HepG2 (cell line): ENCODE measurements at regions of chr13 and their contacts with region 1.

Region 1: DNA sequence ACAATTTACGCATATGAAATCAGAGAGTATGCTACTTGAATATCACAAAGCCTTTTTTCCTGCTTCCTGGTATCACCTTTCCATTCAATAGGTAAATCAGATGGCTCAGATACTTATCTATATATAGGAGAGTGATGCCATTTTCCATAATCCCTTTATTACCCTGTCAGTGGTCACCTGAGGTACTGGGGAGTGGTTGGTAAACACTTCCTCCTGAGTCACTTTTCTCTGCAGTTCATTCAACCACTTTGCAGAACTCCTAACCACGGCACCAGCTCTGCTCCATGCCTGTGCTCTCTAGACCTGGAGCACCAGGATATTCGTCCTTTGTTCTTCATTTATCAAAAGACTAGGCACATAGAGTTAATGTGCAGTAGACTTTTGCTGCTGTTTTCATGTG is 748.5 kb upstream of the KLHL1 start:
- DNase-seq: no peak
- ATAC-seq: no peak
- H3K4me3 ChIP-seq: no peak overlapping the region
- H3K27ac ChIP-seq: no peak overlapping the region
- H3K4me1 ChIP-seq: no peaks in the 10 kb centered on the region
- H3K27me3 ChIP-seq: no peaks in the 10 kb centered on the region; a peak in 1 of 5 replicates
- CTCF ChIP-seq: no peak
- EP300 ChIP-seq: no peak
- POLR2A ChIP-seq: no peak
- RAD21 ChIP-seq: no peak

Region 2: DNA sequence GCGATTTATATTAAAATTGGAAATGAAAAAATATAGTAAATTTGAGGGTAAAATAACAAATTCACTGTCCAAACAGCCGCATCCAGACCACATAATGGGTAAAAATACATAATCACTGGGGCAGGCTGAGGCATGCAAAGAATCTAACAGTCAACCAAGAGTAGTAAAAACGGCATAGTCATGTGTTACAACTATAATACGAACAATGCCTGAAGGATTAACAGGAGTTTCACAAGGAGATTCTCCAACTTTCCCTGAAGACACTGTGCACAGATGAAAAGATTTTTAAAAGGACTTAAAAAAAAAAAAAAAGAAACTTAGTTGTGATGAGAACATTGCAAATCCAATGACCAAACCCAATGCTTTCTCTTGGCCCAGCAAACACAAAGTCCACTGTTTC is 769.5 kb before region 1 on chr13:
- CTCF ChIA-PET with region 1: no interaction called
- POLR2A ChIA-PET with region 1: no interaction called
- in situ Hi-C with region 1: no loop called
- intact Hi-C with region 1: loop called (anchors 5 kb)
- DNase-seq: no peak
- ATAC-seq: no peak
- H3K4me3 ChIP-seq: no peak overlapping the region
- H3K27ac ChIP-seq: no peak overlapping the region
- H3K4me1 ChIP-seq: no peaks in the 10 kb centered on the region
- H3K27me3 ChIP-seq: no peaks in the 10 kb centered on the region
- CTCF ChIP-seq: no peak
- EP300 ChIP-seq: no peak
- POLR2A ChIP-seq: no peak
- RAD21 ChIP-seq: no peak

Region 3: GRCh38 chr13:70541451-70541850 is 315.3 kb before region 1 on chr13:
- CTCF ChIA-PET with region 1: no interaction called
- POLR2A ChIA-PET with region 1: no interaction called
- in situ Hi-C with region 1: no loop called
- intact Hi-C with region 1: no loop called
- DNase-seq: no peak
- ATAC-seq: no peak
- H3K4me3 ChIP-seq: no peak overlapping the region
- H3K27ac ChIP-seq: no peak overlapping the region
- H3K4me1 ChIP-seq: no peaks in the 10 kb centered on the region
- H3K27me3 ChIP-seq: no peaks in the 10 kb centered on the region
- CTCF ChIP-seq: no peak
- EP300 ChIP-seq: no peak
- POLR2A ChIP-seq: no peak
- RAD21 ChIP-seq: no peak

Region 4: DNA sequence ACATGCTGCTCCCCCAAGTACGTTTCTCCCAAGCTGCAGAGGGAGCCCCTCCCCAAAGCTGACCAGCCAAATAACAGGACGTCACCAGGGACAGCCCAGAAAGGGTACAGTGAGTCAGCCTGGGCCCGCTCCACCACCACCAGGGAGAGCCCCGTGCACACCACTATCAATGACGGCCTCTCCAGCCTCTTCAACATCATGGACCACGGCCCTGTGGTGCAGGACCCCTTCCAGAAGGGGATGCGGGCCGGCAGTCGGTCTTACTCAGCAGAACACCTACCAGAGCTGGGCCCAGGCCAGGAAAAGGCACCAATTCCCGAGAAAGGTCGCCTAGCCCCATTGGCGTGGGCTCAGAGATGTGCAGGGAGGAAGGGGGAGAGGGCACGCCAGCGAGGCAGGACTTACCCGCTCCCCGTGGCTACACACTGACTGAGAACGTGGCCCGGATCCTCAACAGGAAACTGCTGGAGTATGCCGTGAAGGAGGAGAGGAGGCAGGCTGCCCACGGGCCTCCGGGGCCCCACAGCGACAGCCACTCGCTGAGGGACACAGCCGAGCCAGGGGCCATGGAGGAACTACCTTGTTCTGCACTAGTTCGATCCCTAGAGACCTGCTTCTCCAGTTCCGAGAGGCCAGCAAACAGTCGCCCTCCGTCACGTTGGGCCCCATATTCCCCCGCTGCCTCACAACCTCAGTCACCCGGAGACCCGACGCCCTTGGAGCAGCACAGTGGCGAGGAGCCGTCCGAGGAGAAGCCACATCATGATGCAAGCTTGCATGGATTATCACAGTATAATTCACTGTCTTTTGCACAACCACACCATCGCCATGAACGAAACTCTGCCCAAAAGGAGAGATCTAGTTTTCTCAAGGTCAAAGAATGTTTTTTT is 67.4 kb after region 1 on chr13:
- CTCF ChIA-PET with region 1: no interaction called
- POLR2A ChIA-PET with region 1: no interaction called
- in situ Hi-C with region 1: no loop called
- intact Hi-C with region 1: loop called (anchors 2 kb)
- DNase-seq: no peak
- ATAC-seq: peak; percentile 61
- H3K4me3 ChIP-seq: no peak overlapping the region
- H3K27ac ChIP-seq: no peak overlapping the region
- H3K4me1 ChIP-seq: 0 out of 2 replicates have a peak, but pooled peaks cover 9% of the 10 kb centered on the region
- H3K27me3 ChIP-seq: no peaks in the 10 kb centered on the region
- CTCF ChIP-seq: no peak
- EP300 ChIP-seq: no peak
- POLR2A ChIP-seq: no peak
- RAD21 ChIP-seq: no peak